ENCODE measurements at regions of chr4 and their contacts with region 1.

Region 1: GRCh38 chr4:128528793-128529553 is 241.4 kb upstream of the PGRMC2 start:
- DNase-seq: peak; percentile 98
- H3K4me3 ChIP-seq: no peak overlapping the region
- CTCF ChIP-seq: no peak

Region 2: DNA sequence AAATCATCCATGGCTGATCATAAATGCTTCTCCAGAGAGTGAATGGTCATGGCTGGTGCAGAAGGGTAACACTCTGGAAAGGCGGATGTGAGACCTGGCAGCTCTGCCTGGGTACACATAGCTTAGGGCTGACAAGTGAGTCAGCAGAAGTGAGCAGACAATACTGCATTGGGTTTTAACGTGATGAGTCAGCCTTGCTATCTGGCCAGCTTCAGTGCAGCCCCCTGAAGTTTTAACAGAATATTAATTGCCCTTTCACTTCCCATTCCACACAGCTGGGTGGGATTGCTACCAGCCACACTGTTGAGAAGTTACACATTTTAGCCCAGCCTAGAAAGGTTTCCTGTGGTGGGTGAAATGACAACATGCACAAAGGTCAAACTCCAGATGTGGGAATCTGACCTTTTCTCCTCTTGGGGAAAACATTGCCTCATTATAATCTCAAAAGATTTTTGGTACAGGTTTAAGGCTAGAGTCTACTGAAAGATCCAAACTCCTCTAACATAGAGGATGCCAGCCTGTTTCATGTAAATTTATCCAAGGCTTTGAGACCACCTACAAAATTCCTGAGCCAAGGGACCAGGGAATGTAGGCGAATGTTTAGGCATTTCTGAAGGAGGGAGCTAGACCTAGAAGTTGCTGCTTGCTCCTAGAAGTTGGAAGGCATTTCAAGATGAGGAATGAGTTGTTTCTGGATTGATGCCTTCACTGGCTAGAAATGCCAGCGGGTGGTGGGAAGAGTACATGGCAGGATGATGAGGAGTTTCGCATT is 11.0 kb before region 1 on chr4:
- CTCF ChIA-PET with region 1: interaction called, 7 read pairs
- POLR2A ChIA-PET with region 1: interaction called, 23 read pairs
- DNase-seq: peak; percentile 87
- H3K4me3 ChIP-seq: no peak overlapping the region
- CTCF ChIP-seq: no peak

Region 3: DNA sequence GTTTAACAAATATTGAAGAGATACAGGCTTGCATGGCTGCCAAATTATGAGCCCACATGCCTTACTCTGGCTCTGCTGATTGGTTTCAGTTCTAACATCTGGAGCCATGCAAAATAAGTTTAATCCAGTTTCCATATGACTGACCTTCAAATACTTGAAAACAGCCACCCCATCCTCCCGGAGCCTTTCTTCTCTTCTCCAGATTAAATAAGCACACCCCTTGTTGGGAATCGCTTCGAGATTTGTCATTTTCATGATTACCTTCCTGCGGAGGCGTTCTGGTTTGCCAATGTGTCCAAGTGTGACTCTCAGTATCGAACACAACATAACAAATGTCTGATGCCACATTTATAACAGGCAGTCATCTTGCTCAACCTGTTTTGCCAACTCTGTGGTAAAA is 178.9 kb after region 1 on chr4:
- CTCF ChIA-PET with region 1: no interaction called
- POLR2A ChIA-PET with region 1: no interaction called
- DNase-seq: no peak
- H3K4me3 ChIP-seq: 0 out of 2 replicates have a peak overlapping the region, but pooled peaks have one; percentile 12
- CTCF ChIP-seq: no peak

Region 4: DNA sequence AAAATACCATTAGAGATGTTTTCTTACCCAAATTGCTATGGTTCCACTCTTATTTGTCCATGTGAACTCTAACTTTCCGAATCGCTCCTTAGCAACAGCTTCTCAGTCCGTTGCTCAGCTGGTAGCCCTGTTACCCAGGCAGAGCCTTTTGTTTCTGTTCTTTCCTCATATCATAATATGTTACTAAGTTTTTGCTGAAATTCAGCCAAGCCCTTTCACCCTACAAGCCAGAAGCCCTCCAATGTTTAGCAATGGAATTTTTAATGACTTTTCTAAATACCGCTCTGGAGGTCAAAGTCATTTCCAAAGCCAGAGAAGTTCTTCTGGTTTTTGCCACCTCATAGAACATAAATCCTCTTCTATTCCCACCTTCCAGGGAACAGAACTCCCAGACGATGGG is 1596.5 kb after region 1 on chr4:
- CTCF ChIA-PET with region 1: no interaction called
- POLR2A ChIA-PET with region 1: no interaction called
- DNase-seq: no peak
- H3K4me3 ChIP-seq: no peak overlapping the region
- CTCF ChIP-seq: no peak

Measured in AG04449 (cell line).